ENCODE measurements at regions of chr3 and their contacts with region 1.

Region 1: DNA sequence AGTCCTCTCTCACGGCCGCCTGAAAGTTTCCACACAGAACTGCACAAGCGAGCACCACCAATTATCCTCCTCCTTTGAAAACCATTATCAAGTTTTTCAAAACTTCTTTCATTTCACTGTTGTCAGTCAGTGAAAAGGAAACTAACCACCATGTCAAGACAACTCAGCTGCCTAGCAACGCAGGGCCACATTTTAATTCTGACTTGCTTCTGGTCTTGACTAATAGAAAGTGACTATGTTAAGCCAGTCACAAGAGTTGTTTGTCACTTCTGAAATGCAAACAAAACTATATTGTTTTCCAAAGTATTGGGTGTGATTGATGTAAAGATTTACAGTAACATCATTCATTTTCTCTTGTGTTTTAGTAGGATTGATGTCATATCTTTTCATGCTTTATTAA is 612.8 kb upstream of the AGTR1 start:
- DNase-seq: no peak

Region 2: DNA sequence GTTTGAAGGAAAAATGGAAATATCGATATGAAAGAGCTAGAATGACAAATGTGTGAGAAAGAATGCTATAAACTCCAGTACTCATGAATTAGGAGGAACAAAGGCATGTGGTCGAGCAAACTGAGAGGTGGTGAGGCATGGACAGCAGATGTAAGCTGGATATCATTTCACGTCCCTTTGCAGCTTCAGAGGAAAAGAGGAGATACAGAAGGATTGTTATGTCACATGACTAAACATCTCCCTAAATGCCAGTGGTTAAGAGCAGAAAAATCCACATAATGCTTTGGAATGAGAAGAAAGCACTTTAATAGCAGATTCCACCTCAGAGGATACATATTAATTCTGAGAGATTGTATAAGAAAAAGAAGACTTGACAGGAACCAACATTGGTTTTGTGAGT is 927.3 kb before region 1 on chr3:
- intact Hi-C with region 1: loop called in 1 of 2 experiments (anchors 5 kb)
- DNase-seq: no peak